CD8-positive, alpha-beta T cell (primary cell): ENCODE measurements at regions of chr2 and their contacts with region 1.

Region 1: GRCh38 chr2:199979832-199980628 is 24.6 kb downstream of the MAIP1 start:
- DNase-seq: peak; percentile 69 to 90 (median 78)
- ATAC-seq: peak; percentile 75
- H3K4me3 ChIP-seq: no peak overlapping the region
- H3K4me3 Mint-ChIP-seq: no peak overlapping the region
- H3K27ac ChIP-seq: no peak overlapping the region
- H3K27ac Mint-ChIP-seq: no peak overlapping the region
- H3K4me1 ChIP-seq: no peaks in the 10 kb centered on the region
- H3K4me1 Mint-ChIP-seq: peaks cover 2% of the 10 kb centered on the region
- H3K27me3 ChIP-seq: no peaks in the 10 kb centered on the region
- H3K27me3 Mint-ChIP-seq: no peaks in the 10 kb centered on the region
- CTCF ChIP-seq: peak; percentile 77

Region 2: GRCh38 chr2:199505755-199506403 is 474.2 kb before region 1 on chr2:
- CTCF ChIA-PET with region 1: no interaction called
- POLR2A ChIA-PET with region 1: no interaction called
- intact Hi-C with region 1: no loop called
- DNase-seq: no peak
- ATAC-seq: no peak
- H3K4me3 ChIP-seq: no peak overlapping the region
- H3K4me3 Mint-ChIP-seq: no peak overlapping the region
- H3K27ac ChIP-seq: no peak overlapping the region
- H3K27ac Mint-ChIP-seq: no peak overlapping the region
- H3K4me1 ChIP-seq: no peaks in the 10 kb centered on the region
- H3K4me1 Mint-ChIP-seq: no peaks in the 10 kb centered on the region
- H3K27me3 ChIP-seq: no peaks in the 10 kb centered on the region
- H3K27me3 Mint-ChIP-seq: peaks cover 20% of the 10 kb centered on the region
- CTCF ChIP-seq: no peak

Region 3: GRCh38 chr2:199962203-199962602 is 17.8 kb before region 1 on chr2:
- CTCF ChIA-PET with region 1: no interaction called
- POLR2A ChIA-PET with region 1: no interaction called
- intact Hi-C with region 1: loop called in 1 of 2 experiments (anchors 1 kb)
- DNase-seq: no peak
- ATAC-seq: no peak
- H3K4me3 ChIP-seq: no peak overlapping the region
- H3K4me3 Mint-ChIP-seq: no peak overlapping the region
- H3K27ac ChIP-seq: no peak overlapping the region
- H3K27ac Mint-ChIP-seq: no peak overlapping the region
- H3K4me1 ChIP-seq: peaks cover 6% of the 10 kb centered on the region
- H3K4me1 Mint-ChIP-seq: peaks cover 18% of the 10 kb centered on the region
- H3K27me3 ChIP-seq: no peaks in the 10 kb centered on the region
- H3K27me3 Mint-ChIP-seq: no peaks in the 10 kb centered on the region
- CTCF ChIP-seq: no peak

Region 4: GRCh38 chr2:200026332-200027230 is 46.6 kb after region 1 on chr2:
- CTCF ChIA-PET with region 1: no interaction called
- POLR2A ChIA-PET with region 1: no interaction called
- intact Hi-C with region 1: no loop called
- DNase-seq: no peak
- ATAC-seq: no peak
- H3K4me3 ChIP-seq: no peak overlapping the region
- H3K4me3 Mint-ChIP-seq: no peak overlapping the region
- H3K27ac ChIP-seq: no peak overlapping the region
- H3K27ac Mint-ChIP-seq: no peak overlapping the region
- H3K4me1 ChIP-seq: no peaks in the 10 kb centered on the region
- H3K4me1 Mint-ChIP-seq: no peaks in the 10 kb centered on the region
- H3K27me3 ChIP-seq: no peaks in the 10 kb centered on the region
- H3K27me3 Mint-ChIP-seq: no peaks in the 10 kb centered on the region
- CTCF ChIP-seq: no peak

Region 5: DNA sequence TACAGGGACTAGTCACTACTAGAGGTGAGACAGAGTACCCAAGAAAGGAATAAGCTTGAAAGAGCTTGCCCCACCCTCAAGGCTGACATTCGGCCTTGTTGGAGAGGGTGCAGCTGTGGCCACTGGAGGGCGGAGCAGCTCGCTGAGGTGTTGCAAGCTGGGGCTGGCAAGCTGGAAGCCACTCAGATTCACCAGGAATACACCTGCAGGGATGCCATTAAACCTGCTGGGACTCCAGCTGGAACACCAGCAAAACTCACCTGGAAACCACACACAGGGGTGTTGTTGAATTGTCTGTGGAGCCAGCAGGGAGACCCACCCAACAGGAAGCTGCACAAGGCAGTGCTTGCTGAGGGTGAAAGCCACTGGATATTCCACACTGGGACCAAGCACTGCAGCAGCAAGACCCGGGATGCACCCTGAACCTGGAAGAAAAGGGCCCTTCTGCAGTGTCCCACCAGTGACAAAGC is 503.7 kb after region 1 on chr2:
- CTCF ChIA-PET with region 1: interaction called, 40 read pairs
- POLR2A ChIA-PET with region 1: interaction called, 3 read pairs
- intact Hi-C with region 1: loop called (anchors 1 kb)
- DNase-seq: no peak
- ATAC-seq: no peak
- H3K4me3 ChIP-seq: no peak overlapping the region
- H3K4me3 Mint-ChIP-seq: no peak overlapping the region
- H3K27ac ChIP-seq: no peak overlapping the region
- H3K27ac Mint-ChIP-seq: no peak overlapping the region
- H3K4me1 ChIP-seq: no peaks in the 10 kb centered on the region
- H3K4me1 Mint-ChIP-seq: peaks cover 3% of the 10 kb centered on the region
- H3K27me3 ChIP-seq: no peaks in the 10 kb centered on the region
- H3K27me3 Mint-ChIP-seq: peaks cover 5% of the 10 kb centered on the region
- CTCF ChIP-seq: no peak

Region 6: GRCh38 chr2:200695191-200695590 is 715.2 kb after region 1 on chr2:
- CTCF ChIA-PET with region 1: no interaction called
- POLR2A ChIA-PET with region 1: no interaction called
- intact Hi-C with region 1: loop called in 1 of 2 experiments (anchors 5 kb)
- DNase-seq: no peak
- ATAC-seq: no peak
- H3K4me3 ChIP-seq: no peak overlapping the region
- H3K4me3 Mint-ChIP-seq: no peak overlapping the region
- H3K27ac ChIP-seq: no peak overlapping the region
- H3K27ac Mint-ChIP-seq: no peak overlapping the region
- H3K4me1 ChIP-seq: no peaks in the 10 kb centered on the region
- H3K4me1 Mint-ChIP-seq: peaks cover 3% of the 10 kb centered on the region
- H3K27me3 ChIP-seq: no peaks in the 10 kb centered on the region
- H3K27me3 Mint-ChIP-seq: no peaks in the 10 kb centered on the region
- CTCF ChIP-seq: no peak

Region 7: GRCh38 chr2:200703127-200703925 is 723.3 kb after region 1 on chr2:
- CTCF ChIA-PET with region 1: interaction called, 3 read pairs
- POLR2A ChIA-PET with region 1: no interaction called
- intact Hi-C with region 1: loop called (anchors 1 to 5 kb)
- DNase-seq: peak in 2 of 9 experiments; percentile 30 to 46
- ATAC-seq: peak; percentile 34
- H3K4me3 ChIP-seq: no peak overlapping the region
- H3K4me3 Mint-ChIP-seq: no peak overlapping the region
- H3K27ac ChIP-seq: no peak overlapping the region
- H3K27ac Mint-ChIP-seq: no peak overlapping the region
- H3K4me1 ChIP-seq: no peaks in the 10 kb centered on the region
- H3K4me1 Mint-ChIP-seq: peaks cover 7% of the 10 kb centered on the region
- H3K27me3 ChIP-seq: no peaks in the 10 kb centered on the region
- H3K27me3 Mint-ChIP-seq: peaks cover 5% of the 10 kb centered on the region
- CTCF ChIP-seq: peak; percentile 10